CD4-positive, alpha-beta T cell (primary cell): ENCODE measurements at regions of chr9 and their contacts with region 1.

Region 1: DNA sequence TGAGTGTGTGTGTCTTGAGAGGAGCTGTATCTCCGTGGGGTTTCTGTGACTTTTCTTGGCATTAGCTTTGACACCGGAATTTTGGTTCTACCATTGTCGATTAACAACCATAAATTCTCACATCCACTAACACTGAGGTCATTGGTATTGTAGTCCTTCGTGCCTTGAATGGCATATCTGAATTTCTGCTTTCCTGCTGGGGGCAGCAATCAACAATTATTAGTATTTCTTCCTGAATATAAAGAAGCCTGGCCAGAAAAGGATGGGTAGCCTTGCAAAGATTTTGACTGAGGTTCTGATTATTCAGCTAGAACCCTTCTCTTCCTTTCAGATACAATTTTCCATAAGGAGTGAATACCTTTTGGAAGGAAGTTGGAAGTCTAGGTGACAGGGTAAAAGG is 33.5 kb upstream of the SHOC1 start:
- DNase-seq: peak in 4 of 14 experiments; percentile 16 to 52 (median 37)
- ATAC-seq: no peak
- H3K4me3 ChIP-seq: no peak overlapping the region
- H3K4me3 Mint-ChIP-seq: no peak overlapping the region
- H3K27ac ChIP-seq: no peak overlapping the region
- H3K27ac Mint-ChIP-seq: no peak overlapping the region
- H3K4me1 ChIP-seq: no peaks in the 10 kb centered on the region
- H3K4me1 Mint-ChIP-seq: no peaks in the 10 kb centered on the region
- H3K27me3 ChIP-seq: no peaks in the 10 kb centered on the region
- H3K27me3 Mint-ChIP-seq: no peaks in the 10 kb centered on the region
- CTCF ChIP-seq: peak; percentile 41

Region 2: DNA sequence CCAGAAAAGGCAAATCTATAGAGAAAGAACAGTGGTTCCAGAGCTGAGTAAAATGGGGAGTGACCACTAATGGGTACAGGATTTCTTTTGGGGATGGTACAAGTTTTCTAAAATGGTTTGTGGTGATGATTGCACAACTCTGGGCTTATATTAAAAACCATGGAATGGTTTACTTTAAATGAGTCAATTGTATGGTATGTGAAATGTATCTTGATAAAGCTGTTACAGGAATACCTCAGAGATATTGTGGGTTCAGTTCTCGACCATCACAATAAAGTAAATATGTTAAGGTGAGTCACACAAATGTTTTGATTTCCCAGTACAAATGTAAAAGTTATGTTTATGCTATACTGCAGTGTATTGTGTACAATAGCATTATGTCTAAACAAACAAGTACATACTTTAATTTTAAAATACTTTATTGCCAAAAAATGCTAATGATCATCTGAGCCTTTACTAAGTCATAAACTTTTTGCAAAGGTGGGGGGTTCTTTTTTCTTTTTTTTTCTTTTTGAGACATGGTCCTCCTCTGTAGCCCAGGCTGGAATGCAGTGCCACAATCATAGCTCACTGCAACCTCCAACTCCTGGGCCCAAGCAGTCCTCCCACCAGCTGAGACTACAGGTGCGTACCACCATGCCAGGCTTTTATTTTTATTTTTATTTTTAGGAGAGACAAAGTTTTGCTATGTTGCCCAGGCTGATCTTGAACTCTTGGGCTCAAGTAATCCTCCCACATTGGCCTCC is 99.4 kb before region 1 on chr9:
- CTCF ChIA-PET with region 1: no interaction called
- POLR2A ChIA-PET with region 1: no interaction called
- intact Hi-C with region 1: no loop called
- DNase-seq: no peak
- ATAC-seq: no peak
- H3K4me3 ChIP-seq: no peak overlapping the region
- H3K4me3 Mint-ChIP-seq: no peak overlapping the region
- H3K27ac ChIP-seq: no peak overlapping the region
- H3K27ac Mint-ChIP-seq: no peak overlapping the region
- H3K4me1 ChIP-seq: no peaks in the 10 kb centered on the region
- H3K4me1 Mint-ChIP-seq: no peaks in the 10 kb centered on the region
- H3K27me3 ChIP-seq: no peaks in the 10 kb centered on the region
- H3K27me3 Mint-ChIP-seq: no peaks in the 10 kb centered on the region
- CTCF ChIP-seq: no peak

Region 3: DNA sequence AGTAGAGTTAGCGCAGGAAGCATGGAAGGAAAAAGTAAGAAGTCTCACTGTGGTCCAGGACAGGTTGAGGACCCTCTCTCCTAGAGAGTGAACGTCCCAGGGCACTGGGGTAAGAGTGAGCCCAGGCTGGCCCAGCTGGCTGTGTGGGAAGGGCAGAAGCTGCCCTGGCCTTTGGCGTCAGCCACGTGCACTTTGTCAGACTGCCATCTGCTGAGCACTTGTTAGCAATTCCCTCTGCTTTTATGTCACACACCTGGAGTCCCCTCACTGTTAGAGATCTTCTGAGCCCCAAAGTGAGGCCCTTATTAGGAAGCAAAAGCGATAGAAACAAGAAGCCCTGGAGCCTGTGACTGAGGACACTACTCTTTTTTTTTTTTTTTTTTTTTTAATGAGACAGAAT is 147.5 kb after region 1 on chr9:
- CTCF ChIA-PET with region 1: no interaction called
- POLR2A ChIA-PET with region 1: no interaction called
- intact Hi-C with region 1: loop called in 1 of 2 experiments (anchors 5 kb)
- DNase-seq: peak in 6 of 14 experiments; percentile 12 to 51 (median 37)
- ATAC-seq: no peak
- H3K4me3 ChIP-seq: no peak overlapping the region
- H3K4me3 Mint-ChIP-seq: no peak overlapping the region
- H3K27ac ChIP-seq: no peak overlapping the region
- H3K27ac Mint-ChIP-seq: no peak overlapping the region
- H3K4me1 ChIP-seq: peaks cover 5% of the 10 kb centered on the region
- H3K4me1 Mint-ChIP-seq: peaks cover 12% of the 10 kb centered on the region
- H3K27me3 ChIP-seq: no peaks in the 10 kb centered on the region
- H3K27me3 Mint-ChIP-seq: no peaks in the 10 kb centered on the region
- CTCF ChIP-seq: no peak

Region 4: DNA sequence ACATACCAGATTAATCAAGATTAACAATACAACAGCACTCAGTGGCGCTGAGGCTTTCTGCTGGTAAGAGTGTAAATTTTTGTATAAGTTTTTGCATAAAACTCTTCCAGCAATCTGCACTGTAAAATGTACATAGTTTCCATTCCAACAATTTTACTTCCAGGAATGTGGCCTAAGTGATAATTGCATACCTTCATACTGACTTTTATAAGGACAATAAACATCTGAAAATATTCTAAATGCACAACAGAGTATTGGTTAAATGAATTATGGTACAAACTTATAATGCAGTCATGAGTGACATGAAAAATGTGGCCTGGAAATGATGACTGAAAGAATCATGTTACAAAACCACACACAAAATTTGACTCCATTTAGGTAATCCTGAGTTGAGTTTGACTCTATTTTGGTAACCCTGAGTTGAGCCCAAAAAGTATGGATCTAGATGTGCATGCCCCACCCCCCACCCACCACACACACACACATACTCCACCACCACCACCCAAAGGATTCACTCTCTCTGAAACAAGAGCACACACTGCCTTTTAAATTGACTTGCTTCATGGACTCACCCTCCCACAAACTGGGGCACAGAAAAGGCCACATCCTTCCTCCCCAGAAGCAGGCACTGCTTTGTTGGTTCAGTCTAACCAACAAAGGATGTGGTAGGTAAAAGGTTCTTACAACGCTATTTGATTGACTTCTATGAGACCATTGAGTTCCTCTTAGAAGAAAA is 209.3 kb after region 1 on chr9:
- CTCF ChIA-PET with region 1: no interaction called
- POLR2A ChIA-PET with region 1: no interaction called
- intact Hi-C with region 1: loop called in 1 of 2 experiments (anchors 5 kb)
- DNase-seq: peak; percentile 37 to 93 (median 62)
- ATAC-seq: peak; percentile 98
- H3K4me3 ChIP-seq: peak overlapping the region; percentile 9
- H3K4me3 Mint-ChIP-seq: peak overlapping the region; percentile 82
- H3K27ac ChIP-seq: no peak overlapping the region
- H3K27ac Mint-ChIP-seq: peak overlapping the region; percentile 68
- H3K4me1 ChIP-seq: peaks cover 54% of the 10 kb centered on the region
- H3K4me1 Mint-ChIP-seq: peaks cover 67% of the 10 kb centered on the region
- H3K27me3 ChIP-seq: no peaks in the 10 kb centered on the region
- H3K27me3 Mint-ChIP-seq: peaks cover 4% of the 10 kb centered on the region
- CTCF ChIP-seq: no peak